ENCODE measurements at regions of chr3 and their contacts with region 1.

Region 1: DNA sequence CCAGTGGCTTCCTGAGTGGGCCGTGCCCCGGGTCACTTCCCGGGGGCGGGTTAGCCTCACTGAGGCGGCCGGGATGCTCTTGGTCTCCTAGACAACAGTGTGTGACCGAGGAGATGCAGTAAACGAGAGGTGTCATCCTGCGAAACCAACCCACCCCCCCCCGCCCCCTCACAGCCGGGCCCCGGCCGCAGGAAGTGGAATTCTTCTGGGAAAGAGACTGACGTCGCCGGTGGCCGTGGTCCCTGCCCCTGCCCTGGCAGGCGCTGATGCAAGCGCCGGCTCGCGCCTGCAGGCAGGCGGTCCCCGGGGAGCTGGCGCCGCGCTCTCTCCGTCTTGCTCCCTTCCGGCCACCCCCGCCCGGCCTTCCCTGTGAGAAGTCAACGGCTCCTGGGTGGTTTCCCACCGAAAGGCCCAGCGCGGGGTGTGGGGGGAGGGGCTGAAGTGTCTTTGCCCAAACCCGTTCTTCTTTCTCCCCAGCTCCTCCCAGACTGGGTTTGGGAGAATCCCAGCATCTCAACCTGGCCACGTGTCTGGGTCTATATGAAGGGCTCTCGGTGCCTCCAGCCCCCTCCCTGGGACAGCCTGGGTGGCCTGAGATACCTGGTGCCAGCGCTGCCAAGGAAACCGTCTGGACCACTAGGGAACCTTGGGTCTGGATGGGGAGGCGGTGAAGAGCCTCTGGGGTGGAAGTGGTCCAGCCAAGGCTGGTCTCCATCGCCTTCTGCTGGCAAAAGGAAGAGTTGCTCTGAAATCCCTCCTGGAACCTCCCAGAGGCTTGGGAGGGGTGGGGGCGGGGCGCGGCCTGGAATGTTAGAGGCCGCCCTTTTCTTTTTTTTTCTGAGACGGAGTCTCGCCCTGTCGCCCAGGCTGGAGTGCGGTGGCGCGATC is 47.3 kb downstream of the BHLHE40 start:
- DNase-seq: peak; percentile 84 to 97
- H3K4me3 ChIP-seq: peak overlapping the region; percentile 60 to 62
- H3K27ac ChIP-seq: peak overlapping the region; percentile 88 to 94
- H3K4me1 ChIP-seq: peaks cover 0 to 21% of the 10 kb centered on the region in 2 donors
- H3K27me3 ChIP-seq: no peaks in the 10 kb centered on the region
- CTCF ChIP-seq: peak; percentile 76 to 81 (median 80)

Region 2: GRCh38 chr3:4712143-4712542 is 314.4 kb before region 1 on chr3:
- intact Hi-C with region 1: loop called (anchors 2 kb)
- DNase-seq: no peak
- H3K4me3 ChIP-seq: no peak overlapping the region
- H3K27ac ChIP-seq: no peak overlapping the region
- H3K4me1 ChIP-seq: no peaks in the 10 kb centered on the region
- H3K27me3 ChIP-seq: no peaks in the 10 kb centered on the region
- CTCF ChIP-seq: no peak

Region 3: DNA sequence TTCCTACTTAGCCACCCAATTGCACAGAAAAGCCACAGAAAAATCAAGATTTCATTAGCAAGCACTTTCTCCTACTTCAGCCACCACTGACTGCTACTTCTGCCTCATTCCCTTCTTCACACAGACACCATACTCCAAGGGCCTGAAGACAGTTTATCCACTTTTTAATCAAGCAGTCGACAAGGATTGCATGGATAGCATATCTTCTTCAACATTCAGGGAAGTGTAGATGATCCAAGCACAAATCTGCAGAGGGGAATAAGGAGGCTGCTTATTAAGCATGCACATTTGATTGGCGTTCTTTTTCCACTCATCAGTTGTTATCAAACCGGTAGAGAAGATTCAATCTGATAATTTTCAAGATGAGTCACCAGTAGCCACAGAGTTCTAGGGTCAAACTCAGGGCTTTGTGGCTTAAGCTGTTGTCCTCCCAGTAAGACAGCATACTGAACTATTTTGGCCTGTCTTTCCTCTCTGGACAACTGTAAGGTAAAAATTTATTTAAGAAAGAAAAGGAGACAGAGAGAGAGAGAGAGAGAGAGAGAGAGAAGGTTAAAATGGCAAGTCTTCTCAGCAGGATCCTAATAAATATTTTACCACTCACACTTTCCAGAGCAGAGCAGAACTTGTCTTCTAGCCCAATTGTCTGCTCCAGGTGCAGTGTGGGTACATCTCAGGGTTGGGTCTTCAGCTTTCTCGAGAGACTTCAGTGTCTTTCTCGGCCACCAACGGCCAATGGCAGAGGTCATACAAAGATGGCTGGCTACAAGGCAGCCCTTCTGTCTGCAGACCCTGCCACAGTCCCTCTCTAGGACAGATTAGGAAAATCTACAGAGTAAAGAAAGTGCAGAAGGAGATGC is 127.9 kb before region 1 on chr3:
- intact Hi-C with region 1: loop called (anchors 1 kb)
- DNase-seq: no peak
- H3K4me3 ChIP-seq: peak overlapping the region in 1 of 2 donors; percentile 25
- H3K27ac ChIP-seq: peak overlapping the region; percentile 75 to 85
- H3K4me1 ChIP-seq: peaks cover 0 to 16% of the 10 kb centered on the region in 2 donors
- H3K27me3 ChIP-seq: no peaks in the 10 kb centered on the region
- CTCF ChIP-seq: no peak

Region 4: GRCh38 chr3:4994823-4995499 is 31.6 kb before region 1 on chr3:
- intact Hi-C with region 1: loop called (anchors 2 kb)
- DNase-seq: peak; percentile 84 to 96
- H3K4me3 ChIP-seq: no peak overlapping the region
- H3K27ac ChIP-seq: peak overlapping the region; percentile 87 to 88
- H3K4me1 ChIP-seq: peaks cover 2 to 14% of the 10 kb centered on the region in 2 donors
- H3K27me3 ChIP-seq: no peaks in the 10 kb centered on the region
- CTCF ChIP-seq: no peak

Measured in ascending aorta (tissue), 2 donors.